IMR-90 (cell line): ENCODE measurements at regions of chr13 and their contacts with region 1.

Region 1: GRCh38 chr13:74210693-74211393 is 76.6 kb upstream of the KLF12 start:
- DNase-seq: peak; percentile 98
- ATAC-seq: peak; percentile 92
- H3K4me3 ChIP-seq: peak overlapping the region; percentile 4; the same call in 1 of the 2 replicates
- H3K27ac ChIP-seq: peak overlapping the region; percentile 79
- H3K4me1 ChIP-seq: peaks cover 14% of the 10 kb centered on the region
- H3K27me3 ChIP-seq: no peaks in the 10 kb centered on the region
- CTCF ChIP-seq: no peak
- POLR2A ChIP-seq: no peak
- RAD21 ChIP-seq: peak; percentile 9; the same call in 1 of the 2 replicates

Region 2: GRCh38 chr13:73870970-73871935 is 339.6 kb before region 1 on chr13:
- CTCF ChIA-PET with region 1: no interaction called
- POLR2A ChIA-PET with region 1: no interaction called
- dilution Hi-C with region 1: no loop called
- in situ Hi-C with region 1: no loop called
- intact Hi-C with region 1: loop called (anchors 5 kb)
- DNase-seq: peak; percentile 96
- ATAC-seq: peak; percentile 92
- H3K4me3 ChIP-seq: peak overlapping the region; percentile 50
- H3K27ac ChIP-seq: peak overlapping the region; percentile 94
- H3K4me1 ChIP-seq: peaks cover 11% of the 10 kb centered on the region
- H3K27me3 ChIP-seq: no peaks in the 10 kb centered on the region
- CTCF ChIP-seq: no peak
- POLR2A ChIP-seq: no peak; the same call in 1 of the 2 replicates
- RAD21 ChIP-seq: no peak

Region 3: GRCh38 chr13:74062933-74063332 is 147.9 kb before region 1 on chr13:
- CTCF ChIA-PET with region 1: no interaction called
- POLR2A ChIA-PET with region 1: no interaction called
- dilution Hi-C with region 1: no loop called
- in situ Hi-C with region 1: no loop called
- intact Hi-C with region 1: loop called (anchors 10 kb)
- DNase-seq: peak; percentile 74
- ATAC-seq: peak; percentile 53
- H3K4me3 ChIP-seq: peak overlapping the region; percentile 31
- H3K27ac ChIP-seq: peak overlapping the region; percentile 41
- H3K4me1 ChIP-seq: peaks cover 12% of the 10 kb centered on the region
- H3K27me3 ChIP-seq: no peaks in the 10 kb centered on the region
- CTCF ChIP-seq: no peak
- POLR2A ChIP-seq: no peak
- RAD21 ChIP-seq: no peak

Region 4: GRCh38 chr13:74090869-74091605 is 119.8 kb before region 1 on chr13:
- CTCF ChIA-PET with region 1: no interaction called
- POLR2A ChIA-PET with region 1: no interaction called
- dilution Hi-C with region 1: no loop called
- in situ Hi-C with region 1: no loop called
- intact Hi-C with region 1: no loop called
- DNase-seq: no peak
- ATAC-seq: no peak
- H3K4me3 ChIP-seq: no peak overlapping the region
- H3K27ac ChIP-seq: no peak overlapping the region
- H3K4me1 ChIP-seq: peaks cover 4% of the 10 kb centered on the region; the same call in 1 of the 2 replicates
- H3K27me3 ChIP-seq: no peaks in the 10 kb centered on the region
- CTCF ChIP-seq: no peak
- POLR2A ChIP-seq: no peak
- RAD21 ChIP-seq: no peak

Region 5: DNA sequence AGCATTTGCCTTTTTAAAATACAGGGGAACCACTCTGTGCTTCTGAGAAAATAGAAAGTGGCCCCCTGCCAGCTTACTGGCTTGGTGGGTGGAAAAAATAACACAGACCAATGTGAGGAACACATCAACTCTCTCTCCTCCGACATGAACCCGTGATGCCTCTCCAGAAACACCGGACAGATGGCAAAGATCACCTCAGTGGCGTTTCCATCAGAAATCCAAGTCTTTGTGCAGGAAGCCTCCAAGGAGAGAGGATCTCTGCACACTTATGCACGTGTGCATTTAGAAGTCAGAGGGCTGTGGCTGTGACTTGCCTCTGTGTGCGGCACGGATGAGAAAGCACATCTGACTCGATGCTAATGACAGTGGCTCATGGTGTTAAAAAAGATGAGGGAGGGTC is 35.6 kb after region 1 on chr13:
- CTCF ChIA-PET with region 1: no interaction called
- POLR2A ChIA-PET with region 1: no interaction called
- dilution Hi-C with region 1: no loop called
- in situ Hi-C with region 1: no loop called
- intact Hi-C with region 1: no loop called
- DNase-seq: peak; percentile 43
- ATAC-seq: no peak
- H3K4me3 ChIP-seq: no peak overlapping the region
- H3K27ac ChIP-seq: no peak overlapping the region
- H3K4me1 ChIP-seq: peaks cover 11% of the 10 kb centered on the region
- H3K27me3 ChIP-seq: no peaks in the 10 kb centered on the region
- CTCF ChIP-seq: no peak
- POLR2A ChIP-seq: no peak
- RAD21 ChIP-seq: no peak